PC-3 (cell line): ENCODE measurements at regions of chr6 and their contacts with region 1.

Region 1: GRCh38 chr6:53956068-53956711 is 155.1 kb upstream of the MLIP start:
- DNase-seq: peak; percentile 89
- ATAC-seq: peak; percentile 89
- H3K4me3 ChIP-seq: no peak overlapping the region
- H3K27ac ChIP-seq: no peak overlapping the region
- H3K4me1 ChIP-seq: peaks cover 20% of the 10 kb centered on the region
- H3K27me3 ChIP-seq: no peaks in the 10 kb centered on the region
- CTCF ChIP-seq: peak; percentile 94

Region 2: DNA sequence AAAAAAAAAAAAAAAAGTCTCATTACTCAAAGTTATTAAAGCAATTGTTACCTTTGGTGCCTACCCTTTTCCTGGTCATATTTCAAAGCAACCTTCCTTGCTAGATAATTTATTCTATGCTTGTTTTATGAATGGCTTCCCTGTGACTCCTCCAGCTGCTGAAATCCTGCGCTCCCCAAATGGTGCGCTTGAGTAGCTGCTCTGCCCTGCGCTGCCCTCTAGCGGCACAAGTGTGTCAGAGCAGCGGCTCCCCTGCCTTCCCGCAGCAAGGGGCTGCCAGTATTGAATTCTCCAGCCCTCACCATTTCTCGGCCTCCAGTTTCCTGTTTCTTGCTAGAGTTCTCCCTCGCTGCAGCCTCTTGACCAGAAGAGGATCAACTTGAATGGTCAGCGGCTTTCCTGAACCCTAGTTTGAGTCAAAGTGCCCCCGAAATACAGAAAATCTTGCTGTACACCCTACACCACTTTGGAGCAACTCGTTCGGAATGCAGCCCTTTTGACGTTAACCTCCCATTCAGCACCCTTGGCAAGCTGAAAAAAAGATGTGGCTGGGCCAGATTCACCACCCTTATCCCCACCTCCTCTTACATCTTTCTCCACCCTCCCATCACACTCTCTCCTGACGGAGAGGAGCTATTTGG is 230.3 kb before region 1 on chr6:
- CTCF ChIA-PET with region 1: interaction called, 18 read pairs
- POLR2A ChIA-PET with region 1: no interaction called
- intact Hi-C with region 1: loop called (anchors 1 kb)
- DNase-seq: peak; percentile 83
- ATAC-seq: peak; percentile 83
- H3K4me3 ChIP-seq: no peak overlapping the region
- H3K27ac ChIP-seq: no peak overlapping the region
- H3K4me1 ChIP-seq: peaks cover 17% of the 10 kb centered on the region
- H3K27me3 ChIP-seq: no peaks in the 10 kb centered on the region
- CTCF ChIP-seq: peak; percentile 95

Region 3: DNA sequence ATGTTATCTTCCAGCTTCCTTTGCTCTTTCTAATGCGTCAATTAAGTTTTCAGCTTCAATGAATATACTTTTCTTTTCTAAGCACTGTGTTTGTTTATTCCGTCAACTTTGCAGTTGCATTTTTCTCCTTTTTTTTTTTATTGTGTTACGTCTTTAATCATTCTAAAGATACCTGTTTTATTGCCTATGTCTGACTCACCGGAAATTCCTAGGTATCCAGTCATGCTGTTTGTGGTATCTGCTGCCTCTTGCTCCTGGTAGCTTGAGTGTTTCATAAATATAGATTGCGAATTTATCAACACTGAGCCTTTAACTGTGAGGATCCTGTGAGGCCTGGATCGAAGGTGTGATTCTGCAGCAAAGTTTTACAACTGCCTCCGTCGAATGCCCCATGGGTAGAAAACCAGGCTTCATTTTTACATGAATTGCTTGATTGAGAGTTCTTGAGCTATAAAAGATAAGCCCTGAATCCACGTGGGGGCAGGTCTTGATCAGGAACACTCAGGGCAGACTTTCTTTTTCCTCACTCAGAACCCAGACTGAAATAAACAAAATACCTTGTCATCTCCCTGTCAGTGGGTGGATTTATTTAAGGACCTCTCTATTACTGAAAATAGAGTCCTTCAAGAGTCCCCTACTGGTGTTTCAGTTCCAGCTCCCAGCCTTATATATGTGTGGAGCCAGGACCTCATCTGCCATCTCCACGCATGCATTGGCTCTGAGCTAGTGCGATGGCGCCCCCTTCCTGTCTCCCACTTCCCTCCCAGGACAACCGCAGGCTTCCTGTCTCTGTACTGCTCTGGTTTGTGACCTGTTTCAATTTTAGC is 221.5 kb before region 1 on chr6:
- CTCF ChIA-PET with region 1: interaction called, 20 read pairs
- POLR2A ChIA-PET with region 1: interaction called, 11 read pairs
- intact Hi-C with region 1: no loop called
- DNase-seq: peak; percentile 94
- ATAC-seq: peak; percentile 92
- H3K4me3 ChIP-seq: peak overlapping the region; percentile 37
- H3K27ac ChIP-seq: peak overlapping the region; percentile 74
- H3K4me1 ChIP-seq: peaks cover 32% of the 10 kb centered on the region
- H3K27me3 ChIP-seq: no peaks in the 10 kb centered on the region
- CTCF ChIP-seq: peak; percentile 80

Region 4: DNA sequence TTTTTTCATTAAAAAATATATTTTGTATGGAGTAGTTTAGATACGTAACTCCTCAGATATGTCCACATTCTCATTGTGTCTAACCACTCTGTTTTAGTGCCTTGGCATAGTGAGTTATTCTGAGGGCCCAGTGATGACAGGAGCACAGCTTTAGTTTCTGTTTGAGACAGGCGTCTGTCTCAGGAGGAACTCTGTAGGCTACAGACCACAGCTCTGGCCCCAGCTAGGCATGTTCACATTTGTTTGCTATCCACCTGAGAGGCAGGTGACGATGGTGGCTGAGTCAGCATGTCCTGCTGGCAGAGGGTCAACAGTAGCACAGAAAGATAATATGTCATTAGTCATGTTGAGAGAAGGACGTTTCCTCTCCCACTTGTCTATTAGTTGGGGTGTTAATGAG is 145.1 kb before region 1 on chr6:
- CTCF ChIA-PET with region 1: interaction called, 4 read pairs
- POLR2A ChIA-PET with region 1: no interaction called
- intact Hi-C with region 1: loop called (anchors 5 kb)
- DNase-seq: peak; percentile 95
- ATAC-seq: peak; percentile 87
- H3K4me3 ChIP-seq: peak overlapping the region; percentile 33
- H3K27ac ChIP-seq: peak overlapping the region; percentile 36
- H3K4me1 ChIP-seq: peaks cover 40% of the 10 kb centered on the region
- H3K27me3 ChIP-seq: no peaks in the 10 kb centered on the region
- CTCF ChIP-seq: no peak

Region 5: GRCh38 chr6:53879608-53880007 is 76.6 kb before region 1 on chr6:
- CTCF ChIA-PET with region 1: no interaction called
- POLR2A ChIA-PET with region 1: no interaction called
- intact Hi-C with region 1: no loop called
- DNase-seq: no peak
- ATAC-seq: no peak
- H3K4me3 ChIP-seq: no peak overlapping the region
- H3K27ac ChIP-seq: no peak overlapping the region
- H3K4me1 ChIP-seq: no peaks in the 10 kb centered on the region
- H3K27me3 ChIP-seq: no peaks in the 10 kb centered on the region
- CTCF ChIP-seq: no peak

Region 6: DNA sequence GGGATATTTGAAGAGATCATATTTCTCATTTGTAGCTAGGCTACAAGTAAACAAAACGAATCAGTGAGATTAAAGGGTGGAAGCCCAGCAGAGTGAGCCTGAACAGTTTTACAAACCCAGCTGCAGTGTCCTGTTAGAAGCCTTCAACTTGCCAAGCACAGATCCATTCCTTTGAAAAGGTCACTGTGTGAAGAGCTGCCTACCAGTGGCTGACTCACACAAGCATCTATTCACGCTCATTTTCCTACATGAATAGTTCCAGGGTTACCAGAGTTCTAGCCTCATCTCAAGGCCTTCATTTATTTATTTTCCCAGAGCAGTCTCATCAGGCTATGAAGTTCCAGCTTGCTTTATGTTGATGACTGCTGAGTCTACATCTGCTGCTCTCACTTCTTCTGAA is 129.4 kb after region 1 on chr6:
- CTCF ChIA-PET with region 1: no interaction called
- POLR2A ChIA-PET with region 1: no interaction called
- intact Hi-C with region 1: no loop called
- DNase-seq: no peak
- ATAC-seq: no peak
- H3K4me3 ChIP-seq: no peak overlapping the region
- H3K27ac ChIP-seq: no peak overlapping the region
- H3K4me1 ChIP-seq: no peaks in the 10 kb centered on the region
- H3K27me3 ChIP-seq: no peaks in the 10 kb centered on the region
- CTCF ChIP-seq: no peak